Right ventricle myocardium inferior (tissue), 1 donor: ENCODE measurements at regions of chr11 and their contacts with region 1.

Region 1: DNA sequence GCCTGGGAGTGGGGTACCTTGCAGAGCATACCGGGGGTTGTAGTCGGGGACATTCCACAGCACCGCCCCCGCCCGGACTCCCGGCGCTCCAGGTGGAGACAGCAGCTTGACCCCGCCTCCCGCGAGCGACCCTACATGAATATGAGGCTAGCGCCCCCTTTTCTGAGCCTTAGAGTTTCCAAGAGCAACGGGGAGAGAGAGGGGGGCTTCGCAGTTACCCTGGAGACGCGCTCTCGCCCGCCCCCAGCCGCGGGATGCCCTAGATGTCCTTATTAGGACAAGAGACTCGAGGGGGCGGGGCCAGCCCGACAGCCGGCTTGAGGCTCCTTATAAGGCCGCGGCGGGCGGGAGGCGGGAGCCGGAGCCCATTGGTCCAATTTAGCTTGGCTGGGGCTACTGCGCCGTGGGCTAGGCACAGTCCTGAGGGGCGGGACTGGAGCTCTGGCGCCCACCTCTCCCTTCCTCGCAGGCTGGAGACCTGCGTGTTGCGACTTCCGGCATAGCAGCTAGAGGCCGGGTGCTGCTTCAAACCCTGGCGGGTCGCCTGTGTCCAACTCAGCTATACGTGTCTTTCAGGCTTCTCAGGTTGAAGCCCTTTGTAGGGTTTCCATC is 927 bp upstream of the MUS81 start:
- DNase-seq: peak; percentile 100
- ATAC-seq: peak; percentile 85

Region 2: GRCh38 chr11:65652511-65653231 is 206.6 kb before region 1 on chr11:
- intact Hi-C with region 1: loop called (anchors 5 kb)
- DNase-seq: peak; percentile 97
- ATAC-seq: peak; percentile 94

Region 3: GRCh38 chr11:65711785-65712632 is 147.3 kb before region 1 on chr11 and contains the start of gene KAT5:
- intact Hi-C with region 1: loop called (anchors 2 kb)
- DNase-seq: peak; percentile 99
- ATAC-seq: peak; percentile 92
- total RNA-seq, gene KAT5: 44.6 TPM

Region 4: GRCh38 chr11:65773784-65774411 is 85.4 kb before region 1 on chr11:
- intact Hi-C with region 1: no loop called
- DNase-seq: no peak
- ATAC-seq: no peak

Region 5: DNA sequence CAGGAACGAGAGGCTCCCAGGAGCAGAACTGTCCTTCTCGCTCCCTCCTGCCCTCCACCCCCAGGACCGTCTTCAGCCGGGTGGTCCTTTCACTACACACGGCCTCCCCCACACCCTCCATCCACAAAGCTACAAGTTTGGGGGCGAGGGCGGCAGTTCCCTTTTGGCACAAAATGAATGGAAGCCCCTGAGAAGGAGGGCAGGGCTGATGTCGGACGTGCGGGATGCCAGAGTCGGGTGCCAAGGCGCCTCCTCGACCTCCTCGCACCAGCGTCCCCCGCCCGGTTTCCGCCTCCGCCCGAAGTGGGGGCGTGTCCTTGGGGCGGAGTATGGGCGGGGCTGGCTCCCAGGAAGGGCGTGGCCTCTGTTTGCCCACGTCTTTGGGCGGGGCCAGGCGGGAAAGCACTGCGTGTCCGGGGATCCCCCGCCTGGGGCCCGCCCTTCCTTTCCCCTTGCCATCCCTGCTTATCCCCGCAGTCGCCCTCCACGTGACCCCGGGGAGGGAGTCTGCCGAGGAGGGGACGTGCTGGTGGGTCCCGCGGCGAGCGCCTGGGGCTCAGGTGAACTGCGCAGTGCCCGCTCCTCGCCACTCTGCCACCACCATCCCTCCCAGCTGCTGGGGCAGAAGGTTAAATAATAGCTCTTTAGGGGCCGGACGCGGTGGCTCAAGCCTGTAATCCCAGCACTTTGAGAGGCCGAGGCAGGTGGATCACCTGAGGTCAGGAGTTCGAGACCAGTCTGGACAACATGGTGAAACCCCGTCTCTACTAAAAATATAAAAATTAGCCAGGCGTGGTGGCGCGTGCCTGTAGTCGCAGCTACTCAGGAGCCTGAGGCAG is 14.2 kb after region 1 on chr11:
- intact Hi-C with region 1: loop called (anchors 1 kb)
- DNase-seq: peak; percentile 98
- ATAC-seq: peak; percentile 96

Region 6: GRCh38 chr11:65888163-65888814 is 29.0 kb after region 1 on chr11 and contains the start of gene FIBP:
- intact Hi-C with region 1: loop called (anchors 1 kb)
- DNase-seq: peak; percentile 99
- ATAC-seq: peak; percentile 88
- total RNA-seq, gene FIBP: 44.7 TPM

Region 7: DNA sequence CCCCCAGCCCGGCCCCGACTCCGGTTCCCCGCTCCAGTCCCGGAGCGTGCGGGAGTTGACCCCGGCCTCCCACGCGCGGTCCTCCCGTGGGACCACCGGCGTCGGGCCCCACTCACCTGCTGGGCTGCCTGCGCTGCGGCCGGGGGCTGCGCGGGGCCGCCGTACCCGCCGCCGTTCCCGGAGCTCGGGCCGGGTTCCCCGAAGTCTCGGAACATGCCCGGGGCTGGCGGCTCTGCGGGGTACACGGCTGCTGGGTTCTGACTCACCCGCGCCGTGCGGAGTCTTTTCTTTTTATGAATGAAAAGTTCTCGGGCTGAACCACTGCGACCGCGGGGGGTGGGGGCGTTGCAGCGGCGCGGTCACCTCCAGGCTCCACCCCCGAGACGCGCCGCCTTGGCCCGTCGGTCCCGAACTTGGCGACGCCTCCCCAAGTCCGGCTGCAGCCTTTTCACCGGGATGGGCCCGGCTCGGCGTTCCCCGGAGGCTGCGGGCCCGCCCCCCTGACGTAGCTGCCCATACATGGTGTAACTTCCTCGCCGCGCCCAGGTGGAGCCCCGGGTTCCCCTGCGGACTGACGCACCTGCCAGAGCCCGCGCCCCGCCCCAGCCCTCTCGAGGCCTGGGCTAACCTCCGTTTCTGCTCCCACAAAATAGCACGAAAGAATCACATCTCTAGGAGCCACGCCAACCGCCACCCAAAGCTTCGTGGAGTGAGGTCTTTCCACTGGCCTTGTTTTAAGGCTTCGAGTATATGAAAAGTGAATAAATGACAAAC is 41.0 kb after region 1 on chr11 and contains the start of gene FOSL1:
- intact Hi-C with region 1: no loop called
- DNase-seq: peak; percentile 91
- ATAC-seq: peak; percentile 90
- total RNA-seq, gene FOSL1: 0.27 TPM

Region 8: DNA sequence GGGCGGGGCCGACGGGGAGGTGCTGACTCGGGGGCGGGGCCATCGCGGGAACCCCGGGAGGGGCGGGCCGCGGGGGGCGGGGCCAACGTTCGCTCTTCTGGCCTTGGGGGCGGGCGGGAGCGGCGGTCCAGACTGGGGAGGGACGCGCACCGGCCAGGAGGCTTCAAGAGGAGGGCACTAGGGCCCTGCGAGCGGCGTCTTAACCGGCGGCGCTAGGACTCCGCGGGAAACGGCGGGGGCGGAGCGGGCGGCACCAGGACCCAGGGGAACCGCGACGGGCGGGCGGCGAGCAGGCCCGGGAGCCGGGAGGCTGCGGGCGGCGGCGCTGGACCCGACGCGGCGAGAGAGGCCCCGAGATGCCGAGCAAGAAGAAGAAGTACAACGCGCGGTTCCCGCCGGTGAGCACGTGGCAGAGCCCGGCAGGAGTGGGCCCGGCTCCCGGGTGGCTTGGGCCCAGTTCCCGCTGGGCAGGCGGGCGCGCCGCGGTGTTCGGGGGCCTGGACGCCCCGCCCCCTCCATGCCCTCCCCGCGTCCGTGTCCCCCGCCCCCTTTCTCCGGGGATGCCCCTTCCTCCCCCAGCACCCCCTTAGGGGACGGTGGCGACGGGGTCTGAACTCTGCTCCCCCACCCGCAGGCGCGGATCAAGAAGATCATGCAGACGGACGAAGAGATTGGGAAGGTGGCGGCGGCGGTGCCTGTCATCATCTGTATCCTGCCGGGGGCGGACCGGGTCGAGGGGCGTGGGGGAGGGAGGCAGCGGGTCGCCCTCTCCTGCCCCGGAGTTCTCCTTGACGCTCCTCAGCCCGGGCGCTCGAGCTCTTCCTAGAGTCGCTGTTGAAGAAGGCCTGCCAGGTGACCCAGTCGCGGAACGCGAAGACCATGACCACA is 60.1 kb after region 1 on chr11 and contains the start of gene DRAP1:
- intact Hi-C with region 1: loop called (anchors 2 kb)
- DNase-seq: peak; percentile 100
- ATAC-seq: peak; percentile 96
- total RNA-seq, gene DRAP1: 110 TPM

Region 9: DNA sequence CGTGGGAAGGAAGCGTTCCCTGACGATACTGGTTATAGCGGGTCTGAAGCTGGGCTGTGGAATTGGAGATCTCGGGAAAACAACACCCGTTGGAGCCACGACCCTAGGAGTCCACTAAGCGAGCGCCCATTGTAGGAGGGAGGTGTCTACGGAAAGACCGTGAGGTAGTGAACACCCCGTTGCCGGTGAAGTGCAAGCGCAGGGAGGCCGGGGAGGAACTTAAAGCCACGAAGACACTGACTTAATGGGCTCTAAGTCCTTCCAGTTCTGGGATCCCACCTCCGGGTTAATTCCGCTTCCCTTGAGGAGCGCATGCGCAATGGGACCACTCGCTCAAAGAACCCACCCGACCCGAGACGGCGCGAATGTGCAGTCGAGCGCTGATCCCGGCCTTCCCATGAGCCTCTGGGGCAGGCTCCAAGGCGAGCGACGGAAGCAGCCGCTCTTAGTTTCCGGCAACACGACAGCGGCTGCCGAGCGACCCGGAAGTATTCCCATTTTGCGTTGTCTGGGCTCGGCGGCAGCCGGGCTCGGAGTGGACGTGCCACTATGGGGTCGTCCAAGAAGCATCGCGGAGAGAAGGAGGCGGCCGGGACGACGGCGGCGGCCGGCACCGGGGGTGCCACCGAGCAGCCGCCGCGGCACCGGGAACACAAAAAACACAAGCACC is 102.1 kb after region 1 on chr11 and contains the start of gene SART1:
- intact Hi-C with region 1: loop called (anchors 10 kb)
- DNase-seq: peak; percentile 99
- ATAC-seq: peak; percentile 99
- total RNA-seq, gene SART1: 29.9 TPM